ENCODE measurements at regions of chr11 and their contacts with region 1.

Region 1: GRCh38 chr11:34492806-34493414 is 20.7 kb downstream of the ELF5 start:
- DNase-seq: peak; percentile 75
- H3K4me3 Mint-ChIP-seq: no peak overlapping the region
- H3K27ac Mint-ChIP-seq: no peak overlapping the region
- H3K4me1 Mint-ChIP-seq: no peaks in the 10 kb centered on the region
- H3K27me3 Mint-ChIP-seq: peaks cover 2% of the 10 kb centered on the region

Region 2: DNA sequence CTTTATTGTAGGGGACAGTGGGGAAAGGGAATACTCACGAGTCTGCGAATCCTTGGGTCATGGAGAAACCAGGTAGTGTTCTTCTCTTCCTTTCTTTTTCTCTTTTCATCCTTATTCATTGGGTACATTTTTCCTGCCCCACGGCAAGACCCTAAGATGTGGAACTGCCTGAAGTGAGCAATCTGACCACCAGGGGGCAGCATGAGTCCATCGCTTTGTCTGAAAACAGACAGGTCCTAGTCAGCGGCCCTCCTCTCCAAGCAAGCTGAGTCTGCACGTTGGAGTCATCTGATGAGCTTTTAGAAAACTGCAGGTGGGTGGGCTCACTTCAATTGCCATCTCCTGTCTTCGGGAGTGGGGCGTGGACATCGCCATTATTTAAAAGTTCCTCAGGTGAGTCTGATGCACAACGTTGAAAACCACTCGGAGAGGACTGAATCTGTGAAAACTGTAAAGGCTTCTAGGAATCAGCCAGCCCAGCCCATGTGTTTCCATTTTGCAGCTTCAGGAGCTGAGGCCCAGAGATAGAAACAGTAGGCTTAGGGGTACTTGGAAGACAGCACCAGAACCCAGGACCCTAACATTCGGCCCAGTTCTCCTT is 684.6 kb before region 1 on chr11:
- intact Hi-C with region 1: loop called (anchors 2 kb)
- DNase-seq: peak; percentile 93
- H3K4me3 Mint-ChIP-seq: no peak overlapping the region
- H3K27ac Mint-ChIP-seq: no peak overlapping the region
- H3K4me1 Mint-ChIP-seq: peaks cover 3% of the 10 kb centered on the region
- H3K27me3 Mint-ChIP-seq: peaks cover 35% of the 10 kb centered on the region

Region 3: DNA sequence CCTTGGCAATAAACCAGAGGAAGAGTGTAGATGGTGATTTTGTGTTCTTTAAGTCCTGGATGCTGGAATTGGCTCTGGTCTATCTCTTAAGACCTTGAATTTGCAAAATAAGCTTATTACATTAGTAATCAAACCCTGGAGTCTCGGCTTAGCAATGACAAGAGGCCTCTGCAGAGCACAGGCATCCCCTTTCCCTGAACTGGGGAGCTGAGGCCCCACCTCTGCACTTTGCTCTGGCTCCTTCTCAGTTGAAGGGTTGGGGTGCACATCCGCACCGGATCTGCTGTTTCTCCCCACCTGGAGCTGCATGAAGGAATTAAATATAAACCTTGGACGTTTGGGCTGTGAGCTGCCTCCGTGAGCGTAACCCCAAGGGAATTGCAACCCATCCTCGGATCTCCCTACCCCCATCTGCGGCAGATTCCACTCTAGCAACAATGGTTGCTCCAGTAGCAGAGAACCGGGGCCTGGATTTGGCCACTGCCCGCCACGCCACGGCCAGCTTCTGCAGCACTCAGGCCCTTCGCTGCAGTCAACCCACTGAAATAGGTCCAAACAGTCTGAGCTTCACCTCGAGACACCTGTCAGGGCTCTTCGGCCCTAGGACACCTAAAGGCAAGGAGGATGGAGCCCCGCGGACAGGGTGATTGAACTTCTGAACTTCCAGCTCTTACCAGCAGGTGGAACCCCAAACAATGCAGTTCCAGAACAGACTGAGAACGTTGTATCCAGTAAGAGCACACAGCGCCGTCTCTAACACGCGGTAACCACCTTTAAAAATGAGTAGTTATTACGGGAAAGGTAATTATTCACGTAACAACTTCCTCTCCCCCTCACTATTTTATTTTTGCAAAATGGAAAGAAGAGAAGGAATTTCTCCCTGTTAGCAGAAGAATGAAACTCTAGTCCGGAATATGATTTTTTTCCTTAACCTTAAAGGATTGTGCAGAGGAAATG is 496.1 kb before region 1 on chr11:
- intact Hi-C with region 1: loop called (anchors 1 kb)
- DNase-seq: peak; percentile 93
- H3K4me3 Mint-ChIP-seq: peak overlapping the region; percentile 30
- H3K27ac Mint-ChIP-seq: no peak overlapping the region
- H3K4me1 Mint-ChIP-seq: peaks cover 8% of the 10 kb centered on the region
- H3K27me3 Mint-ChIP-seq: peaks cover 29% of the 10 kb centered on the region

Region 4: DNA sequence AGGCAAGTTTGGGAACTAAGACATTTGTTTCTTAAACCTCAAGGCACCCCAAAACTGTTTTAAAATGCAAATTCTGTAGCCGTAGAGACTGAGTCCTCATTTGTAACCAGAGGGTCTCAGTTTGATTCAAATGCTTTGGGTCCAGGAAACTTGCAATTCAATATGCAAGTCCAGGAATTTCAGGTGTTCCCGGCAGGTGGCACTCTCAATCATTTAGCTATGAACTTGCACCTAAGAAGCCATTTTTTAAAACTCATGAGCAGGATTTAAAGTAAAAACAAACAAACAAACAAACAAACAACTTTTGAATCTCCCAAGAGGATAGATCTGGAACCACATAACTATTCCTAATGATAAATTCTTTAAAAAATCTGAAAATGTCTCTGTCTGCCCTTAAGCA is 126.4 kb before region 1 on chr11:
- intact Hi-C with region 1: loop called (anchors 1 kb)
- DNase-seq: peak; percentile 64
- H3K4me3 Mint-ChIP-seq: no peak overlapping the region
- H3K27ac Mint-ChIP-seq: no peak overlapping the region
- H3K4me1 Mint-ChIP-seq: peaks cover 8% of the 10 kb centered on the region
- H3K27me3 Mint-ChIP-seq: peaks cover 22% of the 10 kb centered on the region

Measured in activated CD4-positive, alpha-beta T cell treated with anti-CD3 and anti-CD28 coated beads, Interleukin-2, amount 10 ng/mL, durations not matched to agents 24 days and 14 days (primary cell).